ENCODE measurements at regions of chr9 and their contacts with region 1.

Region 1: DNA sequence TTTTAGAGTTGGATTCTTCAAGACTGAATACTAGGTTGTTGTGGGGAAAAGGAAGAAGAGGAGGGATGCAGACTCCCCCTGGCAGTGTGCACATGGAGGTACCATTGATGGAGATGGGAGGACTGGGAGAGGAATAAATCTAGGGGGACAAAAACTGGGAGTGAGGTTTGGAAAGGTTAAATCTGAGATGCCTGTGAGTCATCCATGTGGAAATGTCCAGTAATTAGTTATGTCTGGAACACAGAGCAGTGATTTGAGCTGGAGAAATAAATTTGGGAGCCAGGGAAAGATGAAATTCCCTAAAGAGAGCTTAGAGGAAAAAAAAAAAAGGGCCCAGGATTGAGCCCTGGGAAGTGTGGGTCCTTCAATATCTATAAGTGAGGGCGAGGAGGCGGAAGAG is 8.0 kb upstream of the CCIN start:
- DNase-seq: no peak
- H3K4me3 ChIP-seq: no peak overlapping the region
- H3K27ac ChIP-seq: no peak overlapping the region
- H3K4me1 ChIP-seq: peaks cover 6% of the 10 kb centered on the region
- H3K27me3 ChIP-seq: no peaks in the 10 kb centered on the region
- CTCF ChIP-seq: no peak
- EP300 ChIP-seq: no peak
- POLR2A ChIP-seq: no peak

Region 2: DNA sequence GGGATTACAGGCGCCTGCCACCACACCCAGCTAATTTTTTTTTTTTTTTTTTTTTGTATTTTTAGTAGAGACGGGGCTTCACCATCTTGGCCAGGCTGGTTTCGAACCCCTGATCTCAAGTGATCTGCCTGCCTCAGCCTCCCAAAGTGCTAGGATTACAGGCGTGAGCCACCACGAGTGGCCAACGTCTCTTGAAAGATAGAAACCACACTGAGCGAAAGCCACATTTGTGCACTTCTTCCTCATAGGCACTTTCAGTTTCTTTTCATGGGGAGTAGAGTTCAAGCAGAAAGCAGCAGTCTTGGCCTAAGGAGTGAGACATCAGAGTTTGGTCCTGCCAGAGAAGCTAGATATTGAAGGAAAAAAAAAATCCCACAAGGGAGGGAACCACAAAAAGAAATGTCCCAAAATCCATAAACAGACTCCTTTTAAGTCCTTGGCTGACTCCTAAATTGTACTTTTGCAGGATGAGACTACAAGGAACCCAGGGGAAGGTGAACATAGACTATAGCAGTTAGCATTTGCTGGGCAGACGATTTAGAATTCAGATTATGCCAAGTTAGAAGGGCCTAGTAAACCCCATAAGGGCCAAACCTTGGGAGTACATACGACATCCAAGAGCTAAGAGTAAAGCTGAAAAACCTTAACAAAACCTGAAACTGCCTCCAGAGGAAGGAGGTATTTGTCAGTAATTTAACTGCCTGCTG is 68.5 kb before region 1 on chr9:
- intact Hi-C with region 1: loop called in 1 of 4 experiments (anchors 1 kb)
- DNase-seq: no peak
- H3K4me3 ChIP-seq: no peak overlapping the region
- H3K27ac ChIP-seq: no peak overlapping the region
- H3K4me1 ChIP-seq: peaks cover 3% of the 10 kb centered on the region
- H3K27me3 ChIP-seq: no peaks in the 10 kb centered on the region
- CTCF ChIP-seq: no peak
- EP300 ChIP-seq: no peak
- POLR2A ChIP-seq: no peak

Region 3: GRCh38 chr9:36110434-36110833 is 50.8 kb before region 1 on chr9:
- intact Hi-C with region 1: no loop called
- DNase-seq: no peak
- H3K4me3 ChIP-seq: no peak overlapping the region
- H3K27ac ChIP-seq: no peak overlapping the region
- H3K4me1 ChIP-seq: no peaks in the 10 kb centered on the region
- H3K27me3 ChIP-seq: no peaks in the 10 kb centered on the region
- CTCF ChIP-seq: no peak
- EP300 ChIP-seq: no peak
- POLR2A ChIP-seq: no peak

Region 4: DNA sequence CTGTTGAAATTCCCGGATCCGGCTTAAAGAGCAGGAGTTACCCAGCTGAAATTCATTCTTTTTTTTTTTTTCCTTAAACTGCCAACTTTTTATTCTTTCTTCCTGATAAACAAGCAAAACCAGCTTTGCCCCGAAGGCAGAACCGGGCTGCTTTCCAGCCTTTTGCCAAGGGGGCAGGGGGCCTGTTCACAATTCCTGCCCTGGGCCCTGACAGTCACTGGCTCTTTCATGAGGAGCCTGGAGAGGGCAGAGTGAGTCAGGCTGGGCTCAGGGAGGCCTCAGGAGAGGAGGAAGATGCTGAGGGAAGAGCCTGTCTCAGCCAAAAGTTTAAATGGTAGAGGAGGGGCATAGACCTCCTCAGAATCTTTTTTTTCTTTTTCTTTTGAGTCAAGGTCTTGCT is 19.9 kb before region 1 on chr9:
- intact Hi-C with region 1: loop called in 1 of 4 experiments (anchors 2 kb)
- DNase-seq: peak in 1 of 5 donors; percentile 28
- H3K4me3 ChIP-seq: no peak overlapping the region
- H3K27ac ChIP-seq: no peak overlapping the region
- H3K4me1 ChIP-seq: peaks cover 16% of the 10 kb centered on the region
- H3K27me3 ChIP-seq: no peaks in the 10 kb centered on the region
- CTCF ChIP-seq: no peak
- EP300 ChIP-seq: no peak
- POLR2A ChIP-seq: no peak

Measured in ovary (tissue), 10 donors.